HepG2 (cell line): ENCODE measurements at regions of chr2 and their contacts with region 1.

Region 1: DNA sequence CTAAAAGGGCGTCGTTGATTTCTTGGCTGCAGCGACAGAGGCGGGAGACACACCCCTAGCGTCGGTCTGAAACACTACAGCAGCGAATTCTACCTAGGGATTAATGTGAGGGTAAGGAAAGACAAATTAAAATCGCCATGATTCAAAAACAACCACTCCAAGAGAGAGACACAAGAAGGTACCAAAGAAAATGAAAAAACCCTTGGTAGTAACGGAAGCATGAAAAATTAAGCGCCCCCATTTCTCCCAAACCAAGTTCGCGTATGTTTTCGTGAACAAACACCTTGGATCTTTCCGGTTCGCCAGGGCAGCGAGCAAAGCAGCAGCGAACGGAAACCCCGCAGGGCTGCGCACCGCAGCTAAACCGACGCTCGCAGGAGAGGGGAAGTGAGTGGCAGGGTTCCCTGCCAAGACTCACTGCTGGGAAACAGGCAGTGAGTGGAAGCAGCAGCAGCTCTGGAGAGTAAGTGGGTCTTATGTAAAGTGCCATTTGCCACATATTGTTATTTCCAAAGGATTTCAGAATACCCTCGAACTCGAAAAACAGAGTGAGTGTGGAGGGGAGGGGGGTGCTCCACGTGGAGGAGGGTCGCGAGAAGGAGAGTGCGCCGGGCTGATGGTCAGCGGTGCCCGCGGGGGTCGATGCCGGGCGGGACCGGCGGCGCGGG is 1.0 kb downstream of the PPP3R1 start:
- DNase-seq: peak; percentile 84
- ATAC-seq: peak; percentile 79
- H3K4me3 ChIP-seq: peak overlapping the region; percentile 83 to 97 (median 96)
- H3K27ac ChIP-seq: peak overlapping the region; percentile 94
- H3K4me1 ChIP-seq: peaks cover 54% of the 10 kb centered on the region
- H3K27me3 ChIP-seq: no peaks in the 10 kb centered on the region; a peak in 1 of 5 replicates
- CTCF ChIP-seq: peak; percentile 72
- EP300 ChIP-seq: no peak
- POLR2A ChIP-seq: peak in 1 of 2 experiments; percentile 68; a peak in 3 of 4 replicates
- RAD21 ChIP-seq: peak; percentile 51; the same call in 1 of the 2 replicates

Region 2: GRCh38 chr2:68062680-68063387 is 188.5 kb before region 1 on chr2 and contains the start of gene C1D:
- CTCF ChIA-PET with region 1: no interaction called
- POLR2A ChIA-PET with region 1: interaction called, 7 read pairs
- in situ Hi-C with region 1: no loop called
- intact Hi-C with region 1: loop called (anchors 5 kb)
- DNase-seq: peak; percentile 87
- ATAC-seq: peak; percentile 94
- H3K4me3 ChIP-seq: peak within 1 kb of the TSS; percentile 79 to 100 (median 91)
- H3K27ac ChIP-seq: peak within 1 kb of the TSS; percentile 86
- H3K4me1 ChIP-seq: peaks cover 38% of the 10 kb centered on the region
- H3K27me3 ChIP-seq: no peaks in the 10 kb centered on the region; a peak in 1 of 5 replicates
- CTCF ChIP-seq: no peak
- EP300 ChIP-seq: 0 out of 4 replicates have a peak, but pooled peaks of 1 of the 2 experiments have one; percentile 23
- POLR2A ChIP-seq: peak; percentile 94 to 97
- RAD21 ChIP-seq: no peak
- total RNA-seq, gene C1D: 42.5 and 43.5 TPM in 2 replicates

Region 3: GRCh38 chr2:68157402-68158133 is 93.8 kb before region 1 on chr2 and contains the start of gene PNO1:
- CTCF ChIA-PET with region 1: no interaction called
- POLR2A ChIA-PET with region 1: interaction called, 26 read pairs
- in situ Hi-C with region 1: no loop called
- intact Hi-C with region 1: loop called (anchors 1 kb)
- DNase-seq: peak; percentile 95
- ATAC-seq: peak; percentile 97
- H3K4me3 ChIP-seq: peak within 1 kb of the TSS; percentile 82 to 91 (median 82)
- H3K27ac ChIP-seq: peak within 1 kb of the TSS; percentile 90
- H3K4me1 ChIP-seq: peaks cover 17% of the 10 kb centered on the region; the same call in 1 of the 2 replicates
- H3K27me3 ChIP-seq: no peaks in the 10 kb centered on the region; a peak in 1 of 5 replicates
- CTCF ChIP-seq: 0 out of 2 replicates have a peak, but pooled peaks have one; percentile 14
- EP300 ChIP-seq: peak in 1 of 2 experiments; percentile 83; a peak in 2 of 4 replicates
- POLR2A ChIP-seq: peak; percentile 71 to 84
- RAD21 ChIP-seq: no peak; the same call in 1 of the 2 replicates
- total RNA-seq, gene PNO1: 48.5 and 68.2 TPM in 2 replicates

Region 4: GRCh38 chr2:68196120-68196716 is 55.1 kb before region 1 on chr2:
- CTCF ChIA-PET with region 1: interaction called, 9 read pairs
- POLR2A ChIA-PET with region 1: interaction called, 3 read pairs
- in situ Hi-C with region 1: no loop called
- intact Hi-C with region 1: loop called (anchors 2 kb)
- DNase-seq: peak; percentile 16
- ATAC-seq: no peak
- H3K4me3 ChIP-seq: no peak overlapping the region
- H3K27ac ChIP-seq: no peak overlapping the region
- H3K4me1 ChIP-seq: peaks cover 24% of the 10 kb centered on the region
- H3K27me3 ChIP-seq: no peaks in the 10 kb centered on the region
- CTCF ChIP-seq: no peak
- EP300 ChIP-seq: no peak
- POLR2A ChIP-seq: no peak
- RAD21 ChIP-seq: no peak

Region 5: GRCh38 chr2:68237404-68237803 is 13.9 kb before region 1 on chr2:
- CTCF ChIA-PET with region 1: no interaction called
- POLR2A ChIA-PET with region 1: no interaction called
- in situ Hi-C with region 1: no loop called
- intact Hi-C with region 1: loop called (anchors 2 kb)
- DNase-seq: no peak
- ATAC-seq: no peak
- H3K4me3 ChIP-seq: no peak overlapping the region
- H3K27ac ChIP-seq: no peak overlapping the region
- H3K4me1 ChIP-seq: 0 out of 2 replicates have a peak, but pooled peaks cover 23% of the 10 kb centered on the region
- H3K27me3 ChIP-seq: no peaks in the 10 kb centered on the region
- CTCF ChIP-seq: no peak
- EP300 ChIP-seq: no peak
- POLR2A ChIP-seq: no peak
- RAD21 ChIP-seq: no peak

Region 6: GRCh38 chr2:68287580-68288441 is 36.5 kb after region 1 on chr2:
- CTCF ChIA-PET with region 1: no interaction called
- POLR2A ChIA-PET with region 1: no interaction called
- in situ Hi-C with region 1: no loop called
- intact Hi-C with region 1: no loop called
- DNase-seq: no peak
- ATAC-seq: no peak
- H3K4me3 ChIP-seq: no peak overlapping the region
- H3K27ac ChIP-seq: no peak overlapping the region
- H3K4me1 ChIP-seq: no peaks in the 10 kb centered on the region
- H3K27me3 ChIP-seq: peaks cover 0 to 8% of the 10 kb centered on the region in 2 experiments; a peak in 1 of 5 replicates
- CTCF ChIP-seq: no peak
- EP300 ChIP-seq: no peak
- POLR2A ChIP-seq: no peak
- RAD21 ChIP-seq: no peak

Region 7: DNA sequence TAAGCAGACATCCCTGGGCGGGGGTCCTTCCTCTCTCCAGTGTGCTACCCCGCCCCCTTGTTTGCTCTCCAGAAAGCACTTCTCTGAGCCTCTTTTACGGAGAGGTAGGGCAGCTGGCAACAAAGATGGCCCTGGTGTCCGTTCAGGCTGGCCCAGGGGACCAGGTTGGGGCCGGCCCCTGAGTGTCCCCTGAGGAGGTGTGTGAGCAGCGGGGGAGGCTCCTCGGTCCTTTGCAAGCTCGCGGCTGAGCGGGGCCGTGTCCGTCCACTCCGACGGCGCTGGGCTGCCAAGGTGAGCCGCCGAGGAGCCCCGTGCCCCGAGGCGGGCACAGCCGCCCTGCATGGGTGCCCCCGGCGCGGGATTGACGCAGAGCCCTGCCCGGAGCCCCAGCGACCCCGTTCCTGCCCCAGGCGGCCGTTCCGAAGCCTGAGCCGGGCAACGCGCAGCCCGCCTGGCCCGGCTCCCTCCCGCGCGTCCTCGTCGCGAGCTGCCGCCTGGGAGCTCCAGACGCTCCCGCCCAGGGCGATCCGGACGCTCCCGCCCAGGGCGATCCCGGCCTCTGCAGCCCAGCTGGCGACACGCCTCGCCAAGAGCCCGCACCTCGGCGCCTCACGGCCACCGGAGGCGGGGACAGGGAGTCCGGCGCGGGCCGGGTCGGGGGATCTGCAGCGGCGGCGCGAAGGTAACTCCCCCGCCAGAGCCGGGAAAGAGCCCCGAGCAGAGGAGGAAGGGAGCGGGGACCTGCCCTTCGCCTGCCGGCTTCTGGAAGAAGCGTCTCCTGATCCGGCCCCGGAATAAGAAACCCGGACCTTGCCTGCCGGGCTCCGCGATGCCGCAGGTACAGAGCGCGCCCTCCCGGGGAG is 391.9 kb after region 1 on chr2 and contains the start of gene PROKR1:
- CTCF ChIA-PET with region 1: no interaction called
- POLR2A ChIA-PET with region 1: no interaction called
- in situ Hi-C with region 1: no loop called
- intact Hi-C with region 1: no loop called
- DNase-seq: no peak
- ATAC-seq: peak; percentile 92
- H3K4me3 ChIP-seq: peak within 1 kb of the TSS in 2 of 3 experiments; percentile 20 to 58; a peak in 3 of 6 replicates
- H3K27ac ChIP-seq: no peak within 1 kb of the TSS
- H3K4me1 ChIP-seq: no peaks in the 10 kb centered on the region; the same call in 1 of the 2 replicates
- H3K27me3 ChIP-seq: peaks cover 11 to 59% of the 10 kb centered on the region in 2 experiments; a peak in 4 of 5 replicates
- CTCF ChIP-seq: 0 out of 2 replicates have a peak, but pooled peaks have one; percentile 18
- EP300 ChIP-seq: no peak
- POLR2A ChIP-seq: no peak
- RAD21 ChIP-seq: no peak
- total RNA-seq, gene PROKR1: not detected in 2 replicates